Activated T-helper 2 cell treated with anti-CD3 and anti-CD28 coated beads, Interferon-gamma antibody, Interleukin-2, Interleukin-4, amounts not matched to agents 10 μg/mL and 5 μg/mL and 100 μg/mL, durations not matched to agents 14 hours and 24 hours and 36 hours (primary cell): ENCODE measurements at regions of chr2 and their contacts with region 1.

Region 1: GRCh38 chr2:147663153-147663961 is 181.5 kb upstream of the ACVR2A start:
- DNase-seq: peak; percentile 21
- H3K4me3 Mint-ChIP-seq: peak overlapping the region; percentile 47
- H3K27ac Mint-ChIP-seq: peak overlapping the region; percentile 54
- H3K4me1 Mint-ChIP-seq: peaks cover 37% of the 10 kb centered on the region
- H3K27me3 Mint-ChIP-seq: peaks cover 4% of the 10 kb centered on the region

Region 2: DNA sequence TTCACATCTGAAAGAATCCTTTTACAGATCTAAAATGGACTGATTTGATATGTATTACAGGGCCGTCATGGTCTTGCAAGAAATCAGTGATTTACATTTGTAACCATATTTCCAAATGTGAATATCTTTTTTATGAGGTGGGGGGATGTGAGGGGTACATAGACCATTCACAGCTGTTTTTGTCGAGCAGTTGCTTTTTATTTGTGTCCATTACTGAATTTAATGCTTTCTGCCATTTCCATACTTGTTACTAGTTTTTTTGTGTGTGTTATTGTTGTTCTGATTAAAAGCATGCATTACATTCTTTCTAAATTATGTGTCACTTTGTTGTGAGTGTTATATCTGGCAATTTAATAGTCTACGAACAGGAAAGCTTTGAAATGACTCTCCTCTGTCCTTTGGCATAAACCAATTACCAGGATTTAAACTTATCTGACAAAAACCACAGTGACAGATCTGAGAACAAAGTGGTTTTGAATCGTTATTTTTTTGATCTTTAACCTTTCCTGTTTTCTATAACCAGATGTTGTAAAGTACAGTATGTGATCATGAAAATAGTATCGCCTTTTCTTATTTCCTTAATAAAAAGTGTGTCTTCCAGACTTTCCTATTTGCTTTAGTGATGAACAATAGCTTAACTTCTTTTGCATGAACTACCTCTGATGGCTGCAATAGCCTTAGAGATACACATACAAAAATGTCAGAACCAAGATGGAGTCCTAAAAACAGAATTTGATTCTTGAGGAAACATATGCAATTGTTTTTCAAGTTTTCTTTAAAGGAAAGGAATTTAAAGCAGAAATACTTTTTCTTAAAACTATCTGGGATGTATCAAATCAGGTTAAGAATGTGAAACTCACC is 172.7 kb before region 1 on chr2:
- intact Hi-C with region 1: loop called (anchors 2 kb)
- DNase-seq: no peak
- H3K4me3 Mint-ChIP-seq: peak overlapping the region; percentile 47
- H3K27ac Mint-ChIP-seq: peak overlapping the region; percentile 66
- H3K4me1 Mint-ChIP-seq: peaks cover 40% of the 10 kb centered on the region
- H3K27me3 Mint-ChIP-seq: peaks cover 3% of the 10 kb centered on the region

Region 3: GRCh38 chr2:147628971-147629421 is 34.4 kb before region 1 on chr2:
- intact Hi-C with region 1: loop called (anchors 2 kb)
- DNase-seq: no peak
- H3K4me3 Mint-ChIP-seq: no peak overlapping the region
- H3K27ac Mint-ChIP-seq: peak overlapping the region; percentile 14
- H3K4me1 Mint-ChIP-seq: peaks cover 48% of the 10 kb centered on the region
- H3K27me3 Mint-ChIP-seq: no peaks in the 10 kb centered on the region